K562 (cell line): ENCODE measurements at regions of chr5 and their contacts with region 1.

Region 1: GRCh38 chr5:135560858-135561257 is 17.9 kb downstream of the CXCL14 start:
- DNase-seq: peak; percentile 80 to 85 (median 80)
- ATAC-seq: peak; percentile 99
- H3K4me3 ChIP-seq: no peak overlapping the region
- H3K27ac ChIP-seq: no peak overlapping the region
- H3K4me1 ChIP-seq: peaks cover 0 to 3% of the 10 kb centered on the region in 2 experiments; a peak in 2 of 5 replicates
- H3K27me3 ChIP-seq: peaks cover 3 to 5% of the 10 kb centered on the region in 2 experiments; a peak in 2 of 5 replicates
- CTCF ChIP-seq: peak; percentile 89 to 94 (median 93)
- EP300 ChIP-seq: no peak
- POLR2A ChIP-seq: no peak
- RAD21 ChIP-seq: peak; percentile 71 to 91

Region 2: DNA sequence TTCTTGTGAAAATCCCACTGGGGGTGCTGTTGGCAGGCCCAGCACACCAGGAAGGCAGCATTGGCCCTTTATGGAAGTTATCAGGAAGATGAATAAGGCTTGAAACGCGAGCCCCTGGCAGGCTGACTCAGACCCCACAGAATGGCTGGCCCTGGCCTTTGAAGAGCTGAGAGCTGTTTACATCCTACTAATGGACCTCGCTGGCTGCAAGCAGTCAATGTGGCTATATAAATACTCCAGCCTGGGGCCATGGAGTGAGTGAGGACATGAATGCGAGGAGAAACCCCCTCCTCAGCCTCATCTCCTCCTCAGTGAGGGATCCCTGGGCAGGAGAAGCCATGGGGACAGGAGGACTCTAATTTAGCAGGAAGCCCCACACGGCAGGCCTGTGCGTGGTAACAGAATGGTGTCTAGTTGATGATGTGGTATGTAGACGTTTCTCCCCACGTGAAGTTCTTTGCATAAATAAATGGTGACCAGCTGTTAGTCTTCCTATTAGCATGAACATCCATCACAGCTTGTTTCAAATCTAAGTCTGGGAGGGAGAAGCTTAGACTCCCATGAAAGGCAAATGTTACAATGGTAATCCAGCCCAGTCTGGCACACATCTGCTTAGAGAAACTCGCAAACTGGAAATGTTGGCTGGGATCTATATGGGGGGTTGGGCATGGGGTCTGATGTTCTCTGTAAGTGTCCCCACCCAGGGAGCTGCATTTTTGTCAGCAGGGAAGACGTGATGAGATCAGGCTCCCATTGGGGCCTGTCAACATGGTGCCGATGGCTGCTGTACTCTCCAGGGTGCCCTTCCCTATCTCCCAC is 351.7 kb before region 1 on chr5:
- CTCF ChIA-PET with region 1: no interaction called
- POLR2A ChIA-PET with region 1: no interaction called
- in situ Hi-C with region 1: no loop called
- intact Hi-C with region 1: no loop called
- DNase-seq: peak in 1 of 4 experiments; percentile 16
- ATAC-seq: no peak
- H3K4me3 ChIP-seq: no peak overlapping the region
- H3K27ac ChIP-seq: no peak overlapping the region
- H3K4me1 ChIP-seq: peaks cover 4 to 21% of the 10 kb centered on the region in 2 experiments; a peak in 4 of 5 replicates
- H3K27me3 ChIP-seq: peaks cover 0 to 10% of the 10 kb centered on the region in 2 experiments; a peak in 2 of 5 replicates
- CTCF ChIP-seq: no peak
- EP300 ChIP-seq: no peak
- POLR2A ChIP-seq: no peak
- RAD21 ChIP-seq: no peak

Region 3: GRCh38 chr5:135410348-135410747 is 150.5 kb before region 1 on chr5:
- CTCF ChIA-PET with region 1: no interaction called
- POLR2A ChIA-PET with region 1: no interaction called
- in situ Hi-C with region 1: no loop called
- intact Hi-C with region 1: no loop called
- DNase-seq: no peak
- ATAC-seq: no peak
- H3K4me3 ChIP-seq: no peak overlapping the region
- H3K27ac ChIP-seq: no peak overlapping the region
- H3K4me1 ChIP-seq: no peaks in the 10 kb centered on the region; a peak in 1 of 5 replicates
- H3K27me3 ChIP-seq: no peaks in the 10 kb centered on the region
- CTCF ChIP-seq: no peak
- EP300 ChIP-seq: no peak
- POLR2A ChIP-seq: no peak
- RAD21 ChIP-seq: no peak

Region 4: GRCh38 chr5:135543001-135543484 is 17.8 kb before region 1 on chr5:
- CTCF ChIA-PET with region 1: no interaction called
- POLR2A ChIA-PET with region 1: no interaction called
- in situ Hi-C with region 1: no loop called
- intact Hi-C with region 1: no loop called
- DNase-seq: no peak
- ATAC-seq: no peak
- H3K4me3 ChIP-seq: no peak overlapping the region
- H3K27ac ChIP-seq: no peak overlapping the region
- H3K4me1 ChIP-seq: peaks cover 0 to 7% of the 10 kb centered on the region in 2 experiments; a peak in 1 of 5 replicates
- H3K27me3 ChIP-seq: peaks cover 0 to 21% of the 10 kb centered on the region in 2 experiments; a peak in 3 of 5 replicates
- CTCF ChIP-seq: no peak
- EP300 ChIP-seq: no peak
- POLR2A ChIP-seq: no peak
- RAD21 ChIP-seq: no peak

Region 5: GRCh38 chr5:135829681-135830383 is 269.0 kb after region 1 on chr5:
- CTCF ChIA-PET with region 1: interaction called, 17 read pairs
- POLR2A ChIA-PET with region 1: interaction called, 3 read pairs
- in situ Hi-C with region 1: loop called (anchors 5 kb)
- intact Hi-C with region 1: loop called (anchors 2 kb)
- DNase-seq: peak; percentile 72 to 78 (median 75)
- ATAC-seq: peak; percentile 83
- H3K4me3 ChIP-seq: no peak overlapping the region
- H3K27ac ChIP-seq: no peak overlapping the region
- H3K4me1 ChIP-seq: peaks cover 0 to 5% of the 10 kb centered on the region in 2 experiments; a peak in 1 of 5 replicates
- H3K27me3 ChIP-seq: peaks cover 2 to 63% of the 10 kb centered on the region in 2 experiments; a peak in 3 of 5 replicates
- CTCF ChIP-seq: peak; percentile 85 to 92 (median 88)
- EP300 ChIP-seq: no peak
- POLR2A ChIP-seq: no peak
- RAD21 ChIP-seq: peak; percentile 77 to 82